Activated CD8-positive, alpha-beta T cell treated with anti-CD3 and anti-CD28 coated beads, Interleukin-2, amount 10 ng/mL, durations not matched to agents 7 days and 5 days (primary cell): ENCODE measurements at regions of chr6 and their contacts with region 1.

Region 1: GRCh38 chr6:132813173-132813856 is 1.1 kb upstream of the RPS12 start:
- DNase-seq: peak; percentile 49
- ATAC-seq: peak; percentile 23
- H3K4me3 Mint-ChIP-seq: peak overlapping the region; percentile 89
- H3K27ac Mint-ChIP-seq: peak overlapping the region; percentile 97
- H3K4me1 Mint-ChIP-seq: peaks cover 41% of the 10 kb centered on the region
- H3K27me3 Mint-ChIP-seq: peaks cover 10% of the 10 kb centered on the region

Region 2: DNA sequence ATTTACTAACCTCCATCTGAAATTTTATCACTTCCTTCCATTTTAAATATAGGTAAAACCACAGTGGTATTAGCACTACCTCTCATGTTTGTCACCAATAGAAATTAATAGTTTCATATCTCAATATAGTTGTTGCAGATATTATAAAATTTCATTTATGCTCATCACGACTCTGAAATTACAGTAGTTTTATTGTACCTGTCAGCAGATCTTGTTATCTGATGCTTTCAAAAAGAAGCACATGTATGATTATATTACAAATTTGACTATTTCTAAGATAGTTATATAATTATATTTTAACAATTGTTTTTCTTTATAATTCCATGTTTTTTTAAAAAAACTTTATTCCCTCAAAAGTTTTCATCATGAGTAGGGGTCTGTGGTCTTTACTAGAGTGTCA is 228.6 kb before region 1 on chr6:
- CTCF ChIA-PET with region 1: no interaction called
- POLR2A ChIA-PET with region 1: no interaction called
- DNase-seq: no peak
- ATAC-seq: no peak
- H3K4me3 Mint-ChIP-seq: no peak overlapping the region
- H3K27ac Mint-ChIP-seq: no peak overlapping the region
- H3K4me1 Mint-ChIP-seq: no peaks in the 10 kb centered on the region
- H3K27me3 Mint-ChIP-seq: peaks cover 8% of the 10 kb centered on the region

Region 3: GRCh38 chr6:132669690-132670291 is 143.5 kb before region 1 on chr6:
- CTCF ChIA-PET with region 1: interaction called, 11 read pairs
- POLR2A ChIA-PET with region 1: interaction called, 5 read pairs
- DNase-seq: no peak
- ATAC-seq: peak; percentile 60
- H3K4me3 Mint-ChIP-seq: no peak overlapping the region
- H3K27ac Mint-ChIP-seq: no peak overlapping the region
- H3K4me1 Mint-ChIP-seq: peaks cover 18% of the 10 kb centered on the region
- H3K27me3 Mint-ChIP-seq: peaks cover 11% of the 10 kb centered on the region

Region 4: DNA sequence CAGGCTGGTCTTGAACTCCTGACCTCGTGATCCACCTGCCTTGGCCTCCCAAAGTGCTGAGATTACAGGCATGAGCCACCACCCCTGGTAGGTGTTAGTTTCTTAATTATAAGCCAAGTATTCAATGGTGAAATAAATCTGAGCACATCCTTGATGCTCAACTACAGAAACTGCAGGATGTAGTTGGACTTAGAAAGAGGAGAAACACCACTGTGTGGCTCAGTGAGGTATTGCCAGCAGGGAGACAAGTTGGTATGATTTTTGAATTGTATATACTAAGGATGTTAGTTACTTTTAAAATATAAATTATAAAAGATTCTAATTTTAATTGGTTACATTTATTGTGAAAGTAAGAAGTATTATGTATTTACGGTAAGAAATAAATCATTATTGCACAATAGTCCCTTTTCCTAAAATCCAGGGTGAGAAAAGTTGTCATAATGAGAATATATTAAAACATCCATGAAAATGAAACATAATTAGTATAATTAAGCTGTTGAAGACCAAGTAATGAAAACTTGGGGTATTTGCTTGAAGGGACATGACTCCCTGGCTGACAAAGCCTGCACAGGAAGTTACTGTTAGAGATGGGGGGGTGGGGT is 32.4 kb before region 1 on chr6:
- CTCF ChIA-PET with region 1: no interaction called
- POLR2A ChIA-PET with region 1: interaction called, 13 read pairs
- DNase-seq: peak; percentile 42
- ATAC-seq: peak; percentile 80
- H3K4me3 Mint-ChIP-seq: no peak overlapping the region
- H3K27ac Mint-ChIP-seq: no peak overlapping the region
- H3K4me1 Mint-ChIP-seq: peaks cover 3% of the 10 kb centered on the region
- H3K27me3 Mint-ChIP-seq: no peaks in the 10 kb centered on the region